ENCODE measurements at regions of chr15 and their contacts with region 1.

Region 1: GRCh38 chr15:69058830-69059556 is 44.5 kb downstream of the NOX5 start:
- DNase-seq: peak; percentile 67
- H3K4me3 ChIP-seq: no peak overlapping the region
- H3K27ac ChIP-seq: no peak overlapping the region
- H3K4me1 ChIP-seq: peaks cover 8% of the 10 kb centered on the region
- H3K27me3 ChIP-seq: peaks cover 2% of the 10 kb centered on the region
- CTCF ChIP-seq: peak; percentile 87 to 92

Region 2: DNA sequence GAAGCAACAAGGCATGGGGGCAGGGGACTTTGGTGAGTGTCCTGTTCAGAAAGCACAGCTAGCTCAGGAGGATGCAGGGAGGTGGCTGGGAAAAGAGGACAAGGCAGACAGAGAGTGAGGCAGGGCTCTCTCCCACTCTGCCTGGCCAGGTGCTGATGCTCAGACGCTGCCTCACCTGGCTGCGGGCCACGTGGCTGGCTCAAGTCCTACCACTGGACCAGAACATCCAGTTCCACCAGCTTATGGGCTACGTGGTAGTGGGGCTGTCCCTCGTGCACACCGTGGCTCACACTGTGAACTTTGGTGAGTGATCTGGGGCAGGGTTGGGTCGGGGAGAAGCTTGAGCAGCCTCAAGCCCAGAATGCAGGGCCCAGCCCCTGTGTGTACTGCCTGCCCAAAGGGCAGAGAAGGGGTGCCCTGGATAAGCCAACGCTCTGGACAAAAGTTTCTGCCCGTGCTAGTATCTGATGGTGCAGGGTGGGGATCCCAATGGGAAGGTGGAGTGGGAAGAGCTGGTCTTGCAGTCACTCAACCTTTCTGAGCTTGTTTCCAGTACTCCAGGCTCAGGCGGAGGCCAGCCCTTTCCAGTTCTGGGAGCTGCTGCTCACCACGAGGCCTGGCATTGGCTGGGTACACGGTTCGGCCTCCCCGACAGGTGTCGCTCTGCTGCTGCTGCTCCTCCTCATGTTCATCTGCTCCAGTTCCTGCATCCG is 23.6 kb before region 1 on chr15:
- CTCF ChIA-PET with region 1: interaction called, 3 read pairs
- dilution Hi-C with region 1: no loop called
- in situ Hi-C with region 1: no loop called
- intact Hi-C with region 1: loop called (anchors 1 kb)
- DNase-seq: peak; percentile 80
- H3K4me3 ChIP-seq: no peak overlapping the region
- H3K27ac ChIP-seq: no peak overlapping the region
- H3K4me1 ChIP-seq: peaks cover 30% of the 10 kb centered on the region
- H3K27me3 ChIP-seq: no peaks in the 10 kb centered on the region
- CTCF ChIP-seq: no peak

Region 3: DNA sequence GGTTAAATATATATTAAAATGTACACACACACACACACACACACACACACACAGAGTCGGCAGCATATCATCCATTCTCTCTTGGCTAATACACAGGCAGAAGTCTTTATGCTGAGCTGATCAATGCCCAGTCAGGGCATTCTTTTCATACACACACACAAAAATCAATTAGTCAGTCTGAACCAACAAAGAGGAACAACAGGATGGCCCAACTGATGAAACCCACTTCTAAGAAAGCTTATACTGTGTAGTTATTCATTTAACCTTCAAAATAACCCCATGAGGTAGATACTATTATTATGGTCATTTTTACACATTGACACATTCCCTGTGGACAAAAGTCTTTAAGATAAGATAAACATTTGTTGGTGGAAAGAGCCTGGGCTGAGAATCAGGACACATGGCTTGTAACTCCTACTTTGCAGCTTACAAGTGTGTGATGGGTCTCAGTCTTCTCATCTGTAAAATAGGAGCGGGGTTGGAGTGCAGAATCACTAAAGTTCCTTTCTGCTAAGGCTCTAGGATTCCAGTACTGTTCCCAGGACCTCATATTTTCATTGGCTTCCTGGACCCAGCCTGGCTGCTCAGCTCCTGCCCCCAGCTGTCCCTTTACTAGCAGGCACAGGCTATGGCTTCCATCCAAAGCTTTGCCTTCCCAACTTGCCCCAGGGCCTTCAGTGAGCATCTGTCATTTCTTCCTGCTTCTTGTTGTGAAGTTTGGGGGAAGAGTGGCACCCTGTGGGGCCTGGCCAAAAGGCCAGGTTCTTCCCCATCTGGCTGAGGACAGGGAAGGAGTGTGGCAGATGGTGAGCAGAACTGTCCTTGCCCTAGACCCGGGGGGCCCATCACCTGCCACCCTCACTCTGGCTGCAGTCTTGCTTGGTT is 74.2 kb after region 1 on chr15:
- CTCF ChIA-PET with region 1: no interaction called
- dilution Hi-C with region 1: no loop called
- in situ Hi-C with region 1: no loop called
- intact Hi-C with region 1: no loop called
- DNase-seq: peak; percentile 14
- H3K4me3 ChIP-seq: no peak overlapping the region
- H3K27ac ChIP-seq: no peak overlapping the region
- H3K4me1 ChIP-seq: peaks cover 13% of the 10 kb centered on the region
- H3K27me3 ChIP-seq: no peaks in the 10 kb centered on the region
- CTCF ChIP-seq: no peak

Region 4: GRCh38 chr15:69160141-69160993 is 101.4 kb after region 1 on chr15 and contains the start of gene GLCE:
- CTCF ChIA-PET with region 1: interaction called, 5 read pairs
- dilution Hi-C with region 1: no loop called
- in situ Hi-C with region 1: no loop called
- intact Hi-C with region 1: loop called (anchors 2 kb)
- DNase-seq: peak; percentile 99
- H3K4me3 ChIP-seq: peak within 1 kb of the TSS; percentile 86 to 90 (median 88)
- H3K27ac ChIP-seq: peak within 1 kb of the TSS; percentile 84
- H3K4me1 ChIP-seq: peaks cover 10% of the 10 kb centered on the region
- H3K27me3 ChIP-seq: no peaks in the 10 kb centered on the region
- CTCF ChIP-seq: no peak
- total RNA-seq, gene GLCE: 10.0 to 18.7 TPM

Region 5: GRCh38 chr15:69265347-69265955 is 206.5 kb after region 1 on chr15:
- CTCF ChIA-PET with region 1: no interaction called
- dilution Hi-C with region 1: no loop called
- in situ Hi-C with region 1: loop called (anchors 25 kb)
- intact Hi-C with region 1: loop called (anchors 1 kb)
- DNase-seq: peak; percentile 23
- H3K4me3 ChIP-seq: no peak overlapping the region
- H3K27ac ChIP-seq: no peak overlapping the region
- H3K4me1 ChIP-seq: no peaks in the 10 kb centered on the region
- H3K27me3 ChIP-seq: no peaks in the 10 kb centered on the region
- CTCF ChIP-seq: peak; percentile 33 to 61

Region 6: GRCh38 chr15:69403594-69403993 is 344.6 kb after region 1 on chr15:
- CTCF ChIA-PET with region 1: no interaction called
- dilution Hi-C with region 1: loop called (anchors 10 kb)
- in situ Hi-C with region 1: loop called in 1 of 2 experiments (anchors 10 kb)
- intact Hi-C with region 1: no loop called
- DNase-seq: peak; percentile 44
- H3K4me3 ChIP-seq: no peak overlapping the region
- H3K27ac ChIP-seq: no peak overlapping the region
- H3K4me1 ChIP-seq: peaks cover 13% of the 10 kb centered on the region
- H3K27me3 ChIP-seq: no peaks in the 10 kb centered on the region
- CTCF ChIP-seq: no peak

Region 7: GRCh38 chr15:69462493-69463181 is 403.6 kb after region 1 on chr15:
- CTCF ChIA-PET with region 1: no interaction called
- dilution Hi-C with region 1: no loop called
- in situ Hi-C with region 1: no loop called
- intact Hi-C with region 1: loop called (anchors 1 kb)
- DNase-seq: peak; percentile 96
- H3K4me3 ChIP-seq: peak overlapping the region; percentile 57 to 66 (median 61)
- H3K27ac ChIP-seq: peak overlapping the region; percentile 92
- H3K4me1 ChIP-seq: peaks cover 22% of the 10 kb centered on the region
- H3K27me3 ChIP-seq: no peaks in the 10 kb centered on the region
- CTCF ChIP-seq: peak; percentile 86 to 89

Measured in mammary epithelial cell (primary cell).